Right ventricle myocardium inferior (tissue), 1 donor: ENCODE measurements at regions of chr3 and their contacts with region 1.

Region 1: GRCh38 chr3:50600841-50601591 is 10.6 kb downstream of the CISH start:
- DNase-seq: peak; percentile 97
- ATAC-seq: peak; percentile 83

Region 2: GRCh38 chr3:50583897-50584296 is 17.1 kb before region 1 on chr3:
- intact Hi-C with region 1: loop called (anchors 1 kb)
- DNase-seq: peak; percentile 89
- ATAC-seq: peak; percentile 82